Ascending aorta (tissue), 2 donors: ENCODE measurements at regions of chrX and their contacts with region 1.

Region 1: DNA sequence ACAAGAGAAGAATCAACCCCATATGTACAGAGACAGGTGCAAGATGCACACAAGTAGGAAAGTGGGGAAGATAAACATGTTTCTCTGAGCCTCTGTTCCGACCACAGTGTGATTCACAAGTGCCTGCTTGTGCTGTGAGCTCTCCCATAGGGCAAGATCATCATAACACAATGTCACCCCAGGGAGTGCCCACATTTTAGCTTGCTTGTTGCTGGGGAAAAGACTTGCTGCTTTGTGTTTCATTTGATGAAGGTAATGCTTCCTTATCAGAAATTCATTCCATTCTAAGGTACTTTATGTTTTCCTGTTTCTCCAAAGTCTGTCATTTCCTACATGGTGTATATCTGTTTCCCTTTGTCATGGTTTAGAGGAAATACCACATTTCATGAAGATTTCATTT is 304.5 kb upstream of the DIPK2B start:
- DNase-seq: no peak
- H3K4me3 ChIP-seq: no peak overlapping the region
- H3K27ac ChIP-seq: no peak overlapping the region
- H3K4me1 ChIP-seq: peaks cover 0 to 19% of the 10 kb centered on the region in 2 donors
- H3K27me3 ChIP-seq: no peaks in the 10 kb centered on the region
- CTCF ChIP-seq: no peak

Region 2: GRCh38 chrX:45351478-45351877 is 153.7 kb before region 1 on chrX:
- intact Hi-C with region 1: loop called (anchors 10 kb)
- DNase-seq: no peak
- H3K4me3 ChIP-seq: no peak overlapping the region
- H3K27ac ChIP-seq: peak overlapping the region in 1 of 2 donors; percentile 39
- H3K4me1 ChIP-seq: no peaks in the 10 kb centered on the region
- H3K27me3 ChIP-seq: no peaks in the 10 kb centered on the region
- CTCF ChIP-seq: no peak

Region 3: DNA sequence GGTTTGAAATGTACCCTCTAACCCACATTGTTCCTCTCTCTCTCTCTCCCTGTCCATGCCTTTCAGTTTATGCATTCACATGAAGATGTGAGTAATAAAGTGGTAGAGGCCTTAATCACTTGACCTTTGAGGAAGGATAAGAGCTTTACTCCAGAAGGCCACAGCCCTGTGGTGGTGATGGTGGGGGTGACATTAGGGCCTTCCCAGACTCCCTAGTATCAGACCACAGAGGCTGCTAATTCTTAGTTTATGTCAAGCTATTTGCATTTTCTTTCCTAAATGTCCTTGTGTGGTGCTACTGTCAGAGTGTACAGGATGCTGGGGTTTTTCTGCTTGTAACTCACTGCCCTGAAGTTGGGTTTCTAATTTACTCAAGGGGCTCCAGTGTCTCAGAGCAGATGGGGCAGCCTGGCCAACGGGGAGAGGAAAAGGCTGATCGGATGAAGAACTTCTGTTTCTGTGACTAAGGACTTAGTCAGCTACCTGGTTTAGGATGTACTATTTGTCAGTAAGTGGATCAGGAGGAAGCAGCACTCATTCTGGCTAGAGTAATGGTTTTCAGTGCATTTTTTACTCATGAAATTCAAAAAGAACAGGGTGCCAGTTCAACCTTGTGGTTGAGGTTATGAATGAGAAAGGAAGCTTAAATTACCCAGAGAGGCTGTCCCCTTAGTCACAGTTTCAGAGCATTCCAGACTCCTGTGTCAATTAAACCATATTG is 205.0 kb after region 1 on chrX:
- intact Hi-C with region 1: loop called (anchors 5 kb)
- DNase-seq: no peak
- H3K4me3 ChIP-seq: no peak overlapping the region
- H3K27ac ChIP-seq: peak overlapping the region; percentile 26 to 54
- H3K4me1 ChIP-seq: peaks cover 0 to 3% of the 10 kb centered on the region in 2 donors
- H3K27me3 ChIP-seq: no peaks in the 10 kb centered on the region
- CTCF ChIP-seq: no peak

Region 4: DNA sequence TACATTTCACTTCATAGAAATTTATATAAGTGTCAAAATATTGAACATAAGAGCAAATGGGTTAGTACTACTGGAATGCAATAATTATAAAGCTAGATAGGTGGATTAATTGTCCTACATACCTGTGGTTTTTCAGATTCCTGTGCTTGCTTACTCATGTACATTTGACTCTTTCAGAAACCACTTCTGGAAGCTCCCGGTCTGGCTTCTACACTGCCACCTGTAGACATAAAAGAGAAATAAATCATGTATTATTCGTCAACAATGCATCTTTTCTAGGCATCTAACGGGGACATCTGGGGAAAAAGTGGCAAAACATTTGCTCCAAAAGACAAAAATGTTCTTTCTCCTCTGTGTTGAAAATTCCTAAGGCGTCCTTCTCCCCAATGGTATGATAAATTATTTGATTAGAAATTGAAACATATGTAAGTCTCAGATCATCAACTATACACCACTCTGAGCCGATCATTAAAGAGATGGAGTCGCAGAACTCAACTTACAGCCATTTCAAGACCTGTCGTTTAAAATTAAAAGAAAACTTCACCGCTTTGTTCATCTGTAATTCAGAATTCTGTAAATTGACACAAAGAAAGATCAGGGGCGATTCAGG is 344.1 kb after region 1 on chrX:
- intact Hi-C with region 1: no loop called
- DNase-seq: no peak
- H3K4me3 ChIP-seq: peak overlapping the region in 1 of 2 donors; percentile 83
- H3K27ac ChIP-seq: no peak overlapping the region
- H3K4me1 ChIP-seq: no peaks in the 10 kb centered on the region
- H3K27me3 ChIP-seq: no peaks in the 10 kb centered on the region
- CTCF ChIP-seq: peak in 2 of 3 experiments; percentile 11 to 25